Mammary epithelial cell (primary cell): ENCODE measurements at regions of chr9 and their contacts with region 1.

Region 1: DNA sequence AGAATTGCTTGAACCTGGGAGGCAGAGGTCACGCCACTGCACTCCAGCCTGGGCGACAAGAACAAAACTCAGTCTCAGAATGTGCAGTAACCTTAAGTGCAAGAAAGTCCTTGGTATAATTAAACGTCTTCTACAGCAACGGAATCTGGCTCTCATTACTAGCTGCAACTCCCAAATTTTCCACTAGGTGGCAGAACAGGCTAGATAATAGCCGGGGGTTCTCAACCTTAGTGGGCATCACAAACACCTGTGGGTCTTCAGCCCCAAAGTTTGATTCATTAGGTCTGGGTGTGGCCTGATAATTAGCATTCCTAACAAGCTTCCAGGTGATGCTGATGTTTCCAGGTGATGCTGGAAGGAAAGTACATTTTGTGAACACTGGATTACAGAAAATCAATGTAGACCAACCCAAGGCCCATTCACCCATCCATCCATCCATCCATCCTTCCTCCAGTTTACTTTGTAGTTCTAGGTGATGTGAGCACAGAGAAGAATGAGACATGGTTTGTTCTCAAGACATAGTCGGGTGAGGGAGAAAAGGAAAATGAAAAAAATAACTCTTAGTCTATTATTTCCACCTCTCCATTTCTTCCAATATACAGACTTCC is 37.3 kb downstream of the FBXW2 start:
- DNase-seq: peak; percentile 35
- H3K4me3 ChIP-seq: no peak overlapping the region
- H3K27ac ChIP-seq: no peak overlapping the region
- H3K4me1 ChIP-seq: no peaks in the 10 kb centered on the region
- H3K27me3 ChIP-seq: no peaks in the 10 kb centered on the region
- CTCF ChIP-seq: peak; percentile 87

Region 2: GRCh38 chr9:120610975-120611689 is 144.8 kb before region 1 on chr9:
- CTCF ChIA-PET with region 1: no interaction called
- dilution Hi-C with region 1: no loop called
- in situ Hi-C with region 1: no loop called
- intact Hi-C with region 1: loop called (anchors 1 kb)
- DNase-seq: peak; percentile 83
- H3K4me3 ChIP-seq: no peak overlapping the region
- H3K27ac ChIP-seq: peak overlapping the region; percentile 74
- H3K4me1 ChIP-seq: peaks cover 52% of the 10 kb centered on the region
- H3K27me3 ChIP-seq: no peaks in the 10 kb centered on the region
- CTCF ChIP-seq: peak; percentile 43 to 45

Region 3: GRCh38 chr9:120619751-120620655 is 135.9 kb before region 1 on chr9:
- CTCF ChIA-PET with region 1: interaction called, 4 read pairs
- dilution Hi-C with region 1: no loop called
- in situ Hi-C with region 1: no loop called
- intact Hi-C with region 1: loop called (anchors 2 kb)
- DNase-seq: peak; percentile 55
- H3K4me3 ChIP-seq: no peak overlapping the region
- H3K27ac ChIP-seq: peak overlapping the region; percentile 7
- H3K4me1 ChIP-seq: peaks cover 18% of the 10 kb centered on the region
- H3K27me3 ChIP-seq: no peaks in the 10 kb centered on the region
- CTCF ChIP-seq: peak; percentile 74 to 77

Region 4: GRCh38 chr9:120985810-120986222 is 229.9 kb after region 1 on chr9:
- CTCF ChIA-PET with region 1: no interaction called
- dilution Hi-C with region 1: no loop called
- in situ Hi-C with region 1: no loop called
- intact Hi-C with region 1: loop called (anchors 1 kb)
- DNase-seq: peak; percentile 34
- H3K4me3 ChIP-seq: no peak overlapping the region
- H3K27ac ChIP-seq: no peak overlapping the region
- H3K4me1 ChIP-seq: no peaks in the 10 kb centered on the region
- H3K27me3 ChIP-seq: no peaks in the 10 kb centered on the region
- CTCF ChIP-seq: peak; percentile 56 to 67

Region 5: DNA sequence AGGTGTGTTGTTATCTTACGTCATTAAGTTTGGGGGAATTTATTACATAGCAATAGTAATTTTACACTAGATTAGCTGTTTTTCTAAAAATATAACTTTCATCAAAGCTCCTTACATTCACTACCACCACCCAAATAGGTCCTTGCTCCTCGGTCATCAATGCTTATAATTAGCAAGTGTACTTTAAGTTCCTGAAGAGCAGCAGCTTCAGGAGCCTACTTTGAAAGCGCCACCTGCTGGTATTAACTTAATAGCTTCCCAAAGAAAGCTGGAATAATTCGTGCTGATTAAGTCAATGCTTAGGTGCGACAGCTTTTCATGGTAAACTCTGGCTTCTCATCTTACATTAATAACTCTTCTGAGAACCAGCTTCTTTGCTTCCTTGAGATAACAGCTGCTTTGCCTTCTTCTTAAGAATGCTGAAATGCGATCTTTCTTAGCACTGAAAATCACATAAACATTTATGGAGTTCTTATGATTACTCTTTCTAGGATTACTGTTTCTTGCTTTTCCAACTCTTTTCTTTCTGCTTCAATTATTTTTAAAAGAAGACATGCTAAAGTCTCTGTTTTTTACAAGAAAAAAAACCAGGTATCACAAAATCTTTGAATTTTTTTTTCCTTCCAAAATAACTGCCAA is 304.2 kb after region 1 on chr9:
- CTCF ChIA-PET with region 1: no interaction called
- dilution Hi-C with region 1: no loop called
- in situ Hi-C with region 1: loop called (anchors 10 to 25 kb)
- intact Hi-C with region 1: loop called (anchors 1 kb)
- DNase-seq: peak; percentile 46
- H3K4me3 ChIP-seq: no peak overlapping the region
- H3K27ac ChIP-seq: no peak overlapping the region
- H3K4me1 ChIP-seq: no peaks in the 10 kb centered on the region
- H3K27me3 ChIP-seq: no peaks in the 10 kb centered on the region
- CTCF ChIP-seq: peak; percentile 72 to 73